ENCODE measurements at regions of chr12 and their contacts with region 1.

Region 1: DNA sequence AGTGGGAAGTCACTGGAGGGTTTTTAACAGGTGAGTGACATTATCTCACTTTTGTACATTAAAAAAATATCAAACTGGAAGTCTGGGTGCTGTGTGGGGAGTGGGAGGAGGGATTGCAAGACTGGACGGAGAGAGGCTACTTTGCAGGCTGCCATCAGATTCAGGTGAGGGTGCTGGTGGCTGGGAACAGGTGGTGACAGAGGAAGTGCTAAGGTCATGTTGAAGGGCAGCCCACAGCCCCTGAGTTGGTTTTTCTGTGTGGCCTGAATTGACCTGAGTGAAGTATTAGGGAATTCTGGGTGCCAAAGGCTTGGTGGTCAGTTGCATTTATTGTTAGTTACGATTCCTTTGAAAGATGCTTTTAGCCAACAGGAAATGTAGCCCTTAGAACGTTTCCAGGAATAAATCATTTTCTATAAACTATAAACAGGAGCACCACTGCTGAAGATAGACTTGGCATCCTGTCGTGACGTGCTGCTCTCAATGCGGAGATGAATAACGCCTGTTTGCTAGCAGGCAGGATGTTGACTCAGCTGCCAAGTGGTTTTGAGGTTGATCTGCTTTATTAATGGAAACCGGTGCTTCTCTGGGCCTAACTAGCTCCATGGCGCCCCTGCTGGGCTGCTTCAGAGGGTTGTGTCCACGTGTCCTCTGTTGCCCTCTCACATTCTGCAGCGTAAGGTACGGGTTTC is 707.5 kb upstream of the TMEM132C start:
- DNase-seq: peak in 1 of 9 donors; percentile 80
- ATAC-seq: peak; percentile 73
- H3K4me3 ChIP-seq: no peak overlapping the region
- H3K4me3 Mint-ChIP-seq: peak overlapping the region in 1 of 10 donors; percentile 86
- H3K27ac ChIP-seq: no peak overlapping the region
- H3K27ac Mint-ChIP-seq: peak overlapping the region in 1 of 9 donors; percentile 99
- H3K4me1 ChIP-seq: no peaks in the 10 kb centered on the region
- H3K4me1 Mint-ChIP-seq: peaks cover 0 to 66% (median 0%) of the 10 kb centered on the region in 7 donors
- H3K27me3 ChIP-seq: no peaks in the 10 kb centered on the region
- H3K27me3 Mint-ChIP-seq: peaks cover 0 to 11% (median 0%) of the 10 kb centered on the region in 5 donors

Region 2: GRCh38 chr12:126160912-126161311 is 1398.6 kb before region 1 on chr12:
- CTCF ChIA-PET with region 1: no interaction called
- POLR2A ChIA-PET with region 1: no interaction called
- intact Hi-C with region 1: no loop called
- DNase-seq: no peak
- ATAC-seq: no peak
- H3K4me3 ChIP-seq: no peak overlapping the region
- H3K4me3 Mint-ChIP-seq: no peak overlapping the region
- H3K27ac ChIP-seq: no peak overlapping the region
- H3K27ac Mint-ChIP-seq: no peak overlapping the region
- H3K4me1 ChIP-seq: no peaks in the 10 kb centered on the region
- H3K4me1 Mint-ChIP-seq: no peaks in the 10 kb centered on the region
- H3K27me3 ChIP-seq: no peaks in the 10 kb centered on the region
- H3K27me3 Mint-ChIP-seq: peaks cover 0 to 10% (median 0%) of the 10 kb centered on the region in 5 donors

Region 3: DNA sequence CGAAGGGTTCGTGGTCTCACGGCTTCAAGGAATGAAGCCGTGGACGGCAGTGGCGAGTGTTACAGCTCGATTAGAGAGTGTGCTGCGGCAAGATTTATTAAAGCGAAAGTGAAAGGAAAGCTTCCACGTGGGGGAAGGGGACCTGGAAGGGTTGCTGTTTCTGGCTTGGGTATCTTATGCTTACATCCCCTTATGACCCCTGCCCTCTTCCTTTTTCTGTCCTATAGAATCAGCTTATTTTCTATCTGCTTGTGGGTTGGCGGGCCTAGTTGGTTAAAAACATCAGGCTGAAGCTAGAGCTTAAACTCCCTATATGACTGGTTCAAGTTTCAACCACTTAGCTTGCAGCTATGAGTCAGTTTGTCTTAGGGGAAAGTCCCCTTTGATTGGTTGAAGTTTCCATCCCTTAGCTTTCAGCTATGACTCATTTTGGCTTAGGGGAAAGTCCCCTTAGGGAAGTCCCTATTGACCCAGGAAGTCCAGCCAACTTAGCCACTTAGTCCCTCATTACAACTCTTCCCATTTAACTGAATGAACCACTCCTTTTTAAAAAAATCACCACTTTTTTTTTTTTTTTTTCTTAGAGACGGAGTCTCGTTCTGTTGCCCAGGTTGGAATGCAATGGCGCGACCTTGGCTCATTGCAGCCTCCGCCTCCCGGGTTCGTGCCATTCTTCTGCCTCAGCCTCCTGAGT is 787.2 kb before region 1 on chr12:
- CTCF ChIA-PET with region 1: no interaction called
- POLR2A ChIA-PET with region 1: no interaction called
- intact Hi-C with region 1: loop called in 1 of 2 experiments (anchors 2 kb)
- DNase-seq: peak in 1 of 9 donors; percentile 24
- ATAC-seq: peak; percentile 76
- H3K4me3 ChIP-seq: peak overlapping the region; percentile 47
- H3K4me3 Mint-ChIP-seq: peak overlapping the region in 6 of 10 donors; percentile 5 to 78 (median 26)
- H3K27ac ChIP-seq: peak overlapping the region; percentile 11
- H3K27ac Mint-ChIP-seq: peak overlapping the region in 2 of 9 donors; percentile 65 to 90
- H3K4me1 ChIP-seq: peaks cover 0 to 26% of the 10 kb centered on the region in 2 donors
- H3K4me1 Mint-ChIP-seq: peaks cover 0 to 16% (median 4%) of the 10 kb centered on the region in 7 donors
- H3K27me3 ChIP-seq: no peaks in the 10 kb centered on the region
- H3K27me3 Mint-ChIP-seq: peaks cover 0 to 4% (median 0%) of the 10 kb centered on the region in 5 donors

Region 4: DNA sequence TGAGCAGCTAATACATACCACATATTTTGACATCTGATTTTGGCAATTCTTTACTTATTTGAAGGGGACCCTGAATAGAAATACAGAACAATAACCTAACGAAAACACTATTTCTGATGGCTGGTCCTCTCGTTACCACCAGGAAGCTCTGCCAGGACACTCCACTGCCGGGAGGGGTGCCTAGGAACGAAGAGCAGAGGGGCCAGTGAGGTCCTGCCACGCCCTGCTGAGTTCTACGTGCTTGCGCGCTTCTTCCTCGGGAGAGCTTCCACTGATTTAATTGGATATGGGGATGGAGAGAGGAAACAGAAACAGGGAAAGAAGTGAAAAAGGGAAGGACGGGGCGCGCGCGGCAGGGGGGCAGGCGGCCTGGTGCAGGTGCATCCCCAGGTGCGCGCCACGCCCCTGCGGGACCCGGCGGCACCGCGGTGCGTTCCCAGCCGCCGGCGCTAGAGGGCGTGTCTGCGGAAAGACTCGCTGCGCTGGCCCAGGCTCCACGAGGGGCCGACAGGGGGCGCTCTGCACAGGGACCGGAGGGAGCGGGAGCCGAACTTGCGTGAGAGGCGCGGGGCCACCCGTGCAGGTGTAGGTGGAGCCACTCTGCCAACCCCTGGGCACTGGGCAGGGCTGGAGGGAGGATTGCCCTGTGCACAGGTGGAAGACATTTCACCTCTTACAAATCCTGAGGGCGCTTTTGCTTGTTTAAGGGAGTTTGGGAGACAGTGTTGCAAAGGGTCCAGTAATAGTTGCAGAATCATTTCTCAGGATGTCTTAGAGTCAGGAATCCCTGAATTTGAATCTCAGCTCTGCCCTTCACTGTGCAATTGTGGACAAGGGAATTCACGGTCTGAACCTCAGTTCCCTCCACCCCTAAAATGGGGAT is 278.9 kb before region 1 on chr12:
- CTCF ChIA-PET with region 1: no interaction called
- POLR2A ChIA-PET with region 1: no interaction called
- intact Hi-C with region 1: loop called in 1 of 2 experiments (anchors 1 kb)
- DNase-seq: peak in 8 of 9 donors; percentile 9 to 84 (median 34)
- ATAC-seq: peak; percentile 81
- H3K4me3 ChIP-seq: no peak overlapping the region
- H3K4me3 Mint-ChIP-seq: no peak overlapping the region
- H3K27ac ChIP-seq: no peak overlapping the region
- H3K27ac Mint-ChIP-seq: no peak overlapping the region
- H3K4me1 ChIP-seq: no peaks in the 10 kb centered on the region
- H3K4me1 Mint-ChIP-seq: peaks cover 0 to 9% (median 0%) of the 10 kb centered on the region in 7 donors
- H3K27me3 ChIP-seq: no peaks in the 10 kb centered on the region
- H3K27me3 Mint-ChIP-seq: peaks cover 0 to 19% (median 15%) of the 10 kb centered on the region in 5 donors

Region 5: GRCh38 chr12:127381048-127381668 is 178.3 kb before region 1 on chr12:
- CTCF ChIA-PET with region 1: no interaction called
- POLR2A ChIA-PET with region 1: no interaction called
- intact Hi-C with region 1: loop called in 1 of 2 experiments (anchors 2 kb)
- DNase-seq: peak in 5 of 9 donors; percentile 1 to 63 (median 11)
- ATAC-seq: no peak
- H3K4me3 ChIP-seq: no peak overlapping the region
- H3K4me3 Mint-ChIP-seq: peak overlapping the region in 1 of 10 donors; percentile 35
- H3K27ac ChIP-seq: no peak overlapping the region
- H3K27ac Mint-ChIP-seq: no peak overlapping the region
- H3K4me1 ChIP-seq: no peaks in the 10 kb centered on the region
- H3K4me1 Mint-ChIP-seq: peaks cover 0 to 5% (median 0%) of the 10 kb centered on the region in 7 donors
- H3K27me3 ChIP-seq: no peaks in the 10 kb centered on the region
- H3K27me3 Mint-ChIP-seq: peaks cover 5 to 10% (median 7%) of the 10 kb centered on the region in 5 donors

Region 6: GRCh38 chr12:127485528-127485927 is 74.0 kb before region 1 on chr12:
- CTCF ChIA-PET with region 1: no interaction called
- POLR2A ChIA-PET with region 1: no interaction called
- intact Hi-C with region 1: loop called in 1 of 2 experiments (anchors 2 kb)
- DNase-seq: peak in 1 of 9 donors; percentile 56
- ATAC-seq: no peak
- H3K4me3 ChIP-seq: no peak overlapping the region
- H3K4me3 Mint-ChIP-seq: no peak overlapping the region
- H3K27ac ChIP-seq: no peak overlapping the region
- H3K27ac Mint-ChIP-seq: peak overlapping the region in 1 of 9 donors; percentile 44
- H3K4me1 ChIP-seq: no peaks in the 10 kb centered on the region
- H3K4me1 Mint-ChIP-seq: peaks cover 0 to 9% (median 0%) of the 10 kb centered on the region in 7 donors
- H3K27me3 ChIP-seq: no peaks in the 10 kb centered on the region
- H3K27me3 Mint-ChIP-seq: no peaks in the 10 kb centered on the region

Region 7: GRCh38 chr12:128817111-128818015 is 1257.9 kb after region 1 on chr12:
- CTCF ChIA-PET with region 1: no interaction called
- POLR2A ChIA-PET with region 1: no interaction called
- intact Hi-C with region 1: loop called in 1 of 2 experiments (anchors 10 kb)
- DNase-seq: no peak
- ATAC-seq: peak; percentile 56
- H3K4me3 ChIP-seq: no peak overlapping the region
- H3K4me3 Mint-ChIP-seq: peak overlapping the region in 5 of 10 donors; percentile 0 to 62 (median 37)
- H3K27ac ChIP-seq: no peak overlapping the region
- H3K27ac Mint-ChIP-seq: peak overlapping the region in 3 of 9 donors; percentile 17 to 70 (median 24)
- H3K4me1 ChIP-seq: peaks cover 6 to 52% of the 10 kb centered on the region in 2 donors
- H3K4me1 Mint-ChIP-seq: peaks cover 51 to 85% (median 65%) of the 10 kb centered on the region in 7 donors
- H3K27me3 ChIP-seq: no peaks in the 10 kb centered on the region
- H3K27me3 Mint-ChIP-seq: no peaks in the 10 kb centered on the region